ENCODE measurements at regions of chr18 and their contacts with region 1.

Region 1: GRCh38 chr18:77132371-77133050 is at the start of gene MBP:
- DNase-seq: peak; percentile 56 to 83 (median 73)
- ATAC-seq: peak in 3 of 4 donors; percentile 18 to 69 (median 56)
- H3K4me3 ChIP-seq: peak within 1 kb of the TSS; percentile 59 to 98 (median 80)
- H3K27ac ChIP-seq: peak within 1 kb of the TSS; percentile 70 to 98 (median 88)
- H3K4me1 ChIP-seq: peaks cover 0 to 55% (median 36%) of the 10 kb centered on the region in 12 donors
- H3K27me3 ChIP-seq: peaks cover 0 to 28% (median 0%) of the 10 kb centered on the region in 9 donors
- CTCF ChIP-seq: no peak
- POLR2A ChIP-seq: peak in 1 of 2 donors; percentile 59
- total RNA-seq, gene MBP: 15.8 to 93.0 (median 38.8) TPM

Region 2: DNA sequence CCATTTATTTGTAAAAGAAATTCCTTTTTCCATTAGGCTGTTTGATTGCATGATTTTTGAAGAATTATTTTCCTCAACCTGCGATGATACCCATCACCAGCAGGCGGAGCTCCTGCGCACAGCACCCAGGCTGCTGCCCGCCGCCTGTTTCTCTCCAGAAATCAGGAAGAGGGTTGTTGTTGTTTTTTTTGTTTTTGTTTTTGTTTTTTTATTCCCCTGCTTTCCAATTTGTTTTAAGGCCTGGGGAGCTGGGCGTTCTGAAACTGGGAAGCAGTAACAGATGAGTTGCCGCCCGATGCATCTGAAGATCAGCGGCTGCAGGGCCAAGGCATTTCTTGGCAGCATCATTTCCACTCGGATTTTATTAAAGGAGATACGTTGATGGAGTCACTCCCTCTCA is 132.0 kb before region 1 on chr18:
- intact Hi-C with region 1: loop called in 3 of 10 experiments (anchors 5 to 10 kb)
- DNase-seq: peak in 3 of 5 donors; percentile 50 to 64 (median 52)
- ATAC-seq: no peak
- H3K4me3 ChIP-seq: peak overlapping the region in 7 of 12 donors; percentile 6 to 49 (median 29)
- H3K27ac ChIP-seq: peak overlapping the region in 2 of 12 donors; percentile 27 to 35
- H3K4me1 ChIP-seq: peaks cover 0 to 29% (median 0%) of the 10 kb centered on the region in 12 donors
- H3K27me3 ChIP-seq: no peaks in the 10 kb centered on the region
- CTCF ChIP-seq: peak; percentile 87 to 99 (median 96)
- POLR2A ChIP-seq: no peak

Region 3: DNA sequence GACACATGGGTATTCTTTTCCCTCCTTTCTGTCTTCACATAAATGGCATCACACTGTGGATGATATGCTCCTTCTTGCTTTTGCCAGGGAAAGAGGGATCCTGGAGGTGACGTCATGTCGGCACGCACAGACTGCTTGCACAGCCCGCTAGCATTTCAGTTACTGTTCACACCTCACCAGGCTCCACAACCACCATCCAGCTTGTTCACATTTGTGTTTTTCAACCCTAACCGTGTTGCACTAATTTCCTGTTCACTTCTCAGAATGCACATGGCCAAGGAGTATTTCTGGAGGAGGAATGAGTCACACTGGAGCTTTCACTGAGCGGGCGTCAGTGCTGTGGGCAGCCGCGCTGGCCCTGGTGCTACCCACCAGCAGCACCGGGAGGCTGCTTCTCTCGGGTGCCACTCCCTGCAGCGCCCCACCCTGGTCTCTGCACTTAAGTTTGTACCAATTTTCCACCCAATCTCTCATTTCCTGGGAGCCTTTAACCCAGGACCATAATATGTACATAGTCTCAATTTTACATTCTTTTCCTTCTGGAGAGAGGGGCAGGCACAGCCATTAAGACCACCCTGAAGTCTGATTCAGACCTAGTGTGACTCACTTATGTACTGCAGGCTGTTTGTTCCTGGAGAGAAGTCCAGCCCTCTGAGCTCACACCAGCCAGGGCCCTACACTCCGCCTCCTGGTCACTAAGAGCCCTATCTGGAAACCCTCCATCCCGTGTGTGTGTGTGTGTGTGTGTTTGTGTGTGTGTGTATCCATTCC is 65.0 kb before region 1 on chr18:
- intact Hi-C with region 1: loop called in 4 of 10 experiments (anchors 5 kb)
- DNase-seq: peak in 3 of 5 donors; percentile 61 to 84 (median 77)
- ATAC-seq: peak; percentile 63 to 83 (median 74)
- H3K4me3 ChIP-seq: peak overlapping the region in 2 of 12 donors; percentile 7 to 17
- H3K27ac ChIP-seq: peak overlapping the region; percentile 33 to 88 (median 72)
- H3K4me1 ChIP-seq: peaks cover 0 to 97% (median 45%) of the 10 kb centered on the region in 12 donors
- H3K27me3 ChIP-seq: no peaks in the 10 kb centered on the region
- CTCF ChIP-seq: peak in 1 of 12 donors; percentile 7
- POLR2A ChIP-seq: no peak

Region 4: GRCh38 chr18:77079954-77080682 is 52.4 kb before region 1 on chr18:
- intact Hi-C with region 1: loop called in 1 of 10 experiments (anchors 5 kb)
- DNase-seq: peak in 1 of 5 donors; percentile 58
- ATAC-seq: peak in 3 of 4 donors; percentile 40 to 47 (median 42)
- H3K4me3 ChIP-seq: no peak overlapping the region
- H3K27ac ChIP-seq: peak overlapping the region in 7 of 12 donors; percentile 2 to 79 (median 41)
- H3K4me1 ChIP-seq: peaks cover 0 to 69% (median 34%) of the 10 kb centered on the region in 12 donors
- H3K27me3 ChIP-seq: no peaks in the 10 kb centered on the region
- CTCF ChIP-seq: no peak
- POLR2A ChIP-seq: no peak

Region 5: DNA sequence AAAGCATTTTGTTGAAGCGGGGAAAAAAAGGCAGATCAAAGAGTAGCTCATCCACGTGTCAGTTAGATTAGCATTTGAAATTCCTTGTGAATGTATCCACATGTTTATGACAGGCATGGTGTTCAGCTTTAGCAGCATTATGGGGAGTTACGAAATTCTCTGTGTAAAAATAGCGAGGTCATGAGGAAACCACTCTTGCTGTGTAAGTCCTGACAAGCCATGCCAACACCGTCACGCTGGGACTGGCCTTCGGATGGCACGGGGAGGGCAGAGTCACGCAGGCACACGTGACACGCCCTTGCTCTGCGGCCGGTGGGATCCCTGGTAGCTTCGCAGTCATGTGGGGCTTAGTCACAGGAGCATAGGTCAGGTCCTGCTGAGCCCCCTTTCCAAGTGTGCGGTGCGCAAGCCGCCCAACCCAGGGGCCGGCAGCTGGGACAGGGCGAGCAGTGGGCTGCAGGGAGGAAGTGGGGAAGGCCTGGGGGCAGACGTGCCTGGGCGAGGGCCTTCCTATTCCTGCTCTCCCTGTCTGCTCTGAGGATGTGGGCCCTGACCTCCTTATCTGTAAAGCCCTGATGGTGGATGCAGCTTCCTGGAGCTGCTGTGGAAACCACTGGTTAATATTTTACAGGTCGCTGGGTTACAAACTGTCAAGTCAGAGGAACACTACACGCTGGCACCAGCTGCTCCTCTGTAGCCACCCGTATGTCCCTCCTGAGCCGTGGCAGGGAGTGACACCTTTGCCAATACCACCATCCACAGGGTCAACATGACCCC is 17.9 kb before region 1 on chr18:
- intact Hi-C with region 1: loop called in 1 of 10 experiments (anchors 2 kb)
- DNase-seq: peak; percentile 89 to 95 (median 91)
- ATAC-seq: peak; percentile 94 to 97 (median 96)
- H3K4me3 ChIP-seq: peak overlapping the region in 2 of 12 donors; percentile 17 to 44
- H3K27ac ChIP-seq: peak overlapping the region; percentile 78 to 97 (median 90)
- H3K4me1 ChIP-seq: peaks cover 0 to 76% (median 24%) of the 10 kb centered on the region in 12 donors
- H3K27me3 ChIP-seq: no peaks in the 10 kb centered on the region
- CTCF ChIP-seq: no peak
- POLR2A ChIP-seq: no peak